Ascending aorta (tissue), 2 donors: ENCODE measurements at regions of chr1 and their contacts with region 1.

Region 1: DNA sequence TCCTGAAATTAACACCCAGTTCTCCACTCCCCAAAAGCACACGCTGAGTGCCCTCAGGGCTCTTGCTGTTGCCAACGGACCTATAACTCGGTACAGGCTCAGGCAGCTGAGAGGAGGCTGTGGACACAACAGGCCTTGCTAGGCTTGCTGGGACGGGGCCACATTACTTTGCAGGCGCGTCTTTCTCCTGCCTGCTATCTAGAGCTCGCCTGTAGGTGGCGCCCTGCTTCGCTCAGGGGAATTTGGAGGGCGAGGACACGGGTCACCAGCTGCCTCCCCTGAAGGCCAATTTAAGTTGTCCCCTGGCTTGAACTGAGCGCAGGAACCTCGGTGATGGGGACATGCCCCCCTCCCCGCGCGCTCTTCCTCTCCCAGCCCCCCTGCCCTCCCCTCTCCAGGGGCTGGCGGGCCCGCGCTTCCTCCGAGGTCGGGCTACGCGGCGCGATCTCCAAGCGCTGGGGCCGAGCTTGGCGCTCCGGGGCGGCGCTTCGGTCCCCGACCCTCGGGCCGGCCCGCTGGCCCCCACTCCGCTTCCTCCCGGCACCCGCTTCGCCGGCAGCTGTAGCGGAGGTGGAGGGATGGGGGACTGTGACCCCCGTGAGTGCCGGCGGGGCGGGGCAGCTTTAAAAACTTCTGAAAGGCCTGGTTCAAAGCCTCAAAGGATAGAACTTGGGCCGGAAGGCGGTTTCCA is 32.4 kb upstream of the NFIA start:
- DNase-seq: peak; percentile 66 to 97
- H3K4me3 ChIP-seq: peak overlapping the region; percentile 72 to 97
- H3K27ac ChIP-seq: peak overlapping the region; percentile 97 to 98
- H3K4me1 ChIP-seq: peaks cover 6 to 21% of the 10 kb centered on the region in 2 donors
- H3K27me3 ChIP-seq: no peaks in the 10 kb centered on the region
- CTCF ChIP-seq: peak; percentile 90 to 98 (median 97)

Region 2: DNA sequence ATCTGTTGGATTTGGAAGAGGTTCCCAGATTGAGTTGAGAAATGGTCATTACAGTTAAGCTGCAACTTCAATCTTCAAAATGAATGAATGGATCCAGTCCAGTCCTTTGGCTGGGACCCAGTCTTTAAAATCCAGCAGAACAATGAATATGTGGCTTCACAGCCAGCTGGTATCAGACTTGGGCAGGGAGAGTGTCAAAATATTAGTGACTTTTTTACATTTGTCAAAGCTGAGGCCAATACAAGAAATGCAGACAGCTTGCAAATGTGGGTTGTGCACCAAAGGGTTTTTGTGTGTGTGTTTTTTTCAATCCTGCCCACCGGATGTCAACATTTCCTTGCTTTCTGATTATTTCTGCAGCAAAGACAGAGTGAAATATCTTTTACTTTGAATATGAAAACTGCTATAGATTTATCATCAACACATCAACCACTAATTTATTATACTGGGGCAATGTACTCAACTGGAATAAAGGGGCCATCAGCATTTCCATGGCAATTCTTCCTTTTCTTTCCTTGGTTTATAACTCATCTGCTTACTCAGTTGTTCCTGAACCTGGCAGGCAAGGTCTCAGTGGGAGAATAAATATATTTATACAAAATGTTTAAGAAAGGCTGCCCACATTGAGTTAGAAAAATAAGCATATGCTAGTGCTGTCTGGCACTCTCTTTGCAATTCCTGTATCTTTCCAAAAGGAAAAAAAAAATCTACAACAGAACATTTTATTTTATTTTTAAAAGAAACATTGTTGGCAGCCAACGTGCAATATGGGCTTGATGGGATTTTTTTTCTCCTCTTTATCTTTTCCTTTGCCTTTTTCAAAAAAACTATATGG is 484.9 kb before region 1 on chr1:
- intact Hi-C with region 1: loop called (anchors 10 kb)
- DNase-seq: no peak
- H3K4me3 ChIP-seq: no peak overlapping the region
- H3K27ac ChIP-seq: peak overlapping the region; percentile 12 to 21
- H3K4me1 ChIP-seq: peaks cover 5 to 19% of the 10 kb centered on the region in 2 donors
- H3K27me3 ChIP-seq: no peaks in the 10 kb centered on the region
- CTCF ChIP-seq: no peak

Region 3: GRCh38 chr1:61190618-61191432 is 140.8 kb after region 1 on chr1:
- intact Hi-C with region 1: loop called (anchors 5 kb)
- DNase-seq: no peak
- H3K4me3 ChIP-seq: peak overlapping the region in 1 of 2 donors; percentile 14
- H3K27ac ChIP-seq: peak overlapping the region; percentile 84 to 92
- H3K4me1 ChIP-seq: peaks cover 5 to 47% of the 10 kb centered on the region in 2 donors
- H3K27me3 ChIP-seq: no peaks in the 10 kb centered on the region
- CTCF ChIP-seq: no peak

Region 4: GRCh38 chr1:61221642-61222041 is 171.6 kb after region 1 on chr1:
- intact Hi-C with region 1: no loop called
- DNase-seq: no peak
- H3K4me3 ChIP-seq: peak overlapping the region in 1 of 2 donors; percentile 40
- H3K27ac ChIP-seq: peak overlapping the region; percentile 10 to 30
- H3K4me1 ChIP-seq: peaks cover 4 to 29% of the 10 kb centered on the region in 2 donors
- H3K27me3 ChIP-seq: no peaks in the 10 kb centered on the region
- CTCF ChIP-seq: no peak

Region 5: DNA sequence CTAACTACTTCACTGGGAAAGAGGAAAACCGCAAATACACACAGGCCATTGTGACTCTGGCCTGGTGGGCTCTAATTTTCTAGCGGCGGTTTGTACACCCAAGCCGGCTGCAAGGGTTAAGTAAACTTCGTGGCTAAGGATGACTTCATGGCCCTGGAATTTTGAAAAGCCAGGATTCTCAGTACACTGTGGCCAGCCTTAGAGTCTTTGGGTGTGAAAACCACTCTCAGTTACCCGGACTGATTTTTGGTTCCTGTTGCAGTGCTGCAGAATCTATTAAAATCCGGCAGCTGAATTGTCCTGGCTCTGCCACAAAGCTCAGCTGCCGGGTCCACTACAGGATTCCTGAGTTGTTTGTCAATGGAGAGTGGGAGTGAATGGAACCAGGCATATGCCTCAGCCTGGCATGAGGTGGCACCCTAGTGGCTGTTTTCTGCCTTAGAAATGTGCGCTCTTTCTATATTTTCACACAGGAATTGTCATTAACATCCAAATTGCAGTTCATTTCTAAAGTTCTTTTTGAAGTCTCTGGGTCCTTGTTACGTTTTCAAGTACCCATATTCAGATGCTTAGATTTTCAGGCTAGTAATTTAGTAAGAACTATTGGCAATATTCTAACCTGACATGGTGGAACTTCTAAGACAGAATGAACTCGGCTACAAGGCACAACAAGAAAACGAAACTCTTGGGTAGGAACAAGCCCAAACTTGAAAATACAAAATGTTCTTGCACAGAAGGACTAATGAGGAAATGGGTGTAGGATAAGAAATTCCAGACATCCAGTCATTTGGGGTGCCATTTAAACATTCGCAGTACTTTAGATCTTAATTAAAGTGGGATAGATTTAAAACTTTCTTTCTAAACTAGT is 288.2 kb after region 1 on chr1:
- intact Hi-C with region 1: loop called (anchors 1 kb)
- DNase-seq: peak; percentile 38 to 92
- H3K4me3 ChIP-seq: peak overlapping the region; percentile 27 to 54
- H3K27ac ChIP-seq: peak overlapping the region; percentile 86 to 88
- H3K4me1 ChIP-seq: peaks cover 3 to 45% of the 10 kb centered on the region in 2 donors
- H3K27me3 ChIP-seq: no peaks in the 10 kb centered on the region
- CTCF ChIP-seq: peak; percentile 71 to 80 (median 75)

Region 6: DNA sequence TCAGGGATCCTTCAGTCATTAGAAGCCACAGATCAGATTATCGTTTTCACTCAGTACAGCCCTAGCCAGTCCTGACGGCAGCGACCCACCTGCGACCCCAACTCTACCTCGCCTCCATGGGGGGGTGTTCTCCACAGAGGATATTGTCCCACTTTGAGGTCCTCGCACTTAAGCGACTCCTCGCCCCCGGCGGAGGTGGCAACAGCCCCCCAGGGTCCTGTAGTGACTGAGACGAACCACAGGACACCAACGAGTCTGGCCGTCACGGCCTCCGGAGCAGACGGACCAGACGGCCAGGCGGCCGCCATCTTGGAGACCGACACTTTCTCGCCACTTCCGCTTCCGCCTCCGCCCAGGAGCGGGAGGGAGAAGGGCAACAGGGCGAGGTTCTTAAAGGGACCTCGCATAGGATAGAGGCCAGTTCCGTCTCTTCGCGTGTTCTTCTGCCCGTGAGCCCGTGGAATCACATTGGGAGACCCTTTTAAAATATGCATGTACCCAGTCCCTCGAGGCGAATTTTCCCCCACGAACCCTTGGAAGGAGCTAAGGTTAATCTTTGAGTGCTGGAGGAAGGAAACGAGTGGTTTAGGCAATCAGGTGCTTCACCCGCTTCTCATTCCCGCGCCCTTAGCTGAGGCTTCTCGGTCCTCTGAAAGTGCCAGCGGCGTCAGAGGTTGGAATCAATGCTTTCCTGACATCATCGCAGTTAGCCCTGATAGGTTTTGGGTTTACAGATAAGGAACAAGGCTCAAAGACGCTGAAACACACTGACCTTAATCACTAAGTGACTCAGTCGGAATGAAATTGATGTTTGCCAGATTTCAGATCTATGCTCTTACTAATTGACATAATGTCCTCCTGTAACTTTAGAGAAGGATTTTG is 675.1 kb after region 1 on chr1 and contains the start of gene TM2D1:
- intact Hi-C with region 1: loop called (anchors 10 kb)
- DNase-seq: peak; percentile 55 to 95
- H3K4me3 ChIP-seq: peak within 1 kb of the TSS; percentile 79 to 81
- H3K27ac ChIP-seq: peak within 1 kb of the TSS; percentile 89 to 96
- H3K4me1 ChIP-seq: peaks cover 6 to 12% of the 10 kb centered on the region in 2 donors
- H3K27me3 ChIP-seq: no peaks in the 10 kb centered on the region
- CTCF ChIP-seq: peak in 1 of 3 experiments; percentile 4
- total RNA-seq, gene TM2D1: 43.2 TPM